ENCODE measurements at regions of chr20 and their contacts with region 1.

Region 1: GRCh38 chr20:35359335-35359950 is 52.3 kb downstream of the UQCC1 start:
- DNase-seq: no peak
- H3K4me3 ChIP-seq: no peak overlapping the region
- CTCF ChIP-seq: no peak

Region 2: GRCh38 chr20:35432430-35432735 is 72.9 kb after region 1 on chr20:
- in situ Hi-C with region 1: loop called (anchors 5 kb)
- DNase-seq: no peak
- H3K4me3 ChIP-seq: no peak overlapping the region
- CTCF ChIP-seq: peak; percentile 4